Left ventricle myocardium inferior (tissue), 1 donor: ENCODE measurements at regions of chr12 and their contacts with region 1.

Region 1: DNA sequence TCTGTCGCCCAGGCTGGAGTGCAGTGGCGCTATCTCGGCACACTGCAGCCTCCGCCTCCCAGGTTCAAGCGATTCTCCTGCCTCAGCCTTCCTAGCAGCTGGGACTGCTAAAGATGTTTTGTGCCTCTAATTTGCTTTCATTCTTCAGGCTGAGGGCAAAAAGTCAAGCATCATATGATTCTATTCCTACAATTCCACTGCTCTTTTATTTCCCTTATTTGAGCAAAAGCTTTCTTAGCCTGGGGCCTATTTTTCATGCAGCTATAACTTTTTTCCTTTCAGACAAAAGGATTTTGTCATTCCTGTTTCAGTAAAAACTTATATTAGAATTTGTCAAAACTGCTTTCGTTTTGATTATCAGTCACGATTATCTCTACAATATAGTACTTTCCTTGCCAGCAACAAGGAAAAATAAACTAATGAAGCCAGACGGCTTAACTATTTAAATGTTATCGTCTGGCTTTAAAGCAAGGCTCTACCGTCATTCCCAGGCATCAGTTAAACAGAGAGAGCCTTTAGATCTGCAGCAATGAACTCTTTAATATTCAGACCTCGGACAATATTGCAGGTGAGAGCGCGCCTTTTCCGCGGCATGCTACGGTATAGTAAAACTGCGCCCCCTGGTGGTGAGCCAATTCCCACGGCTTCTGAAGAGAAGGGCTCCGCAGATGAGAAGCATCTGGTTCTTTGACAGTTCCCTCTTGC is 1.4 kb upstream of the SLC2A13 start:
- DNase-seq: peak; percentile 91
- H3K4me3 ChIP-seq: peak overlapping the region; percentile 89
- H3K27ac ChIP-seq: peak overlapping the region; percentile 90
- H3K4me1 ChIP-seq: peaks cover 47% of the 10 kb centered on the region
- H3K27me3 ChIP-seq: no peaks in the 10 kb centered on the region
- CTCF ChIP-seq: peak; percentile 94

Region 2: GRCh38 chr12:39723831-39724230 is 383.4 kb before region 1 on chr12:
- intact Hi-C with region 1: no loop called
- DNase-seq: no peak
- H3K4me3 ChIP-seq: no peak overlapping the region
- H3K27ac ChIP-seq: no peak overlapping the region
- H3K4me1 ChIP-seq: no peaks in the 10 kb centered on the region
- H3K27me3 ChIP-seq: no peaks in the 10 kb centered on the region
- CTCF ChIP-seq: no peak

Region 3: DNA sequence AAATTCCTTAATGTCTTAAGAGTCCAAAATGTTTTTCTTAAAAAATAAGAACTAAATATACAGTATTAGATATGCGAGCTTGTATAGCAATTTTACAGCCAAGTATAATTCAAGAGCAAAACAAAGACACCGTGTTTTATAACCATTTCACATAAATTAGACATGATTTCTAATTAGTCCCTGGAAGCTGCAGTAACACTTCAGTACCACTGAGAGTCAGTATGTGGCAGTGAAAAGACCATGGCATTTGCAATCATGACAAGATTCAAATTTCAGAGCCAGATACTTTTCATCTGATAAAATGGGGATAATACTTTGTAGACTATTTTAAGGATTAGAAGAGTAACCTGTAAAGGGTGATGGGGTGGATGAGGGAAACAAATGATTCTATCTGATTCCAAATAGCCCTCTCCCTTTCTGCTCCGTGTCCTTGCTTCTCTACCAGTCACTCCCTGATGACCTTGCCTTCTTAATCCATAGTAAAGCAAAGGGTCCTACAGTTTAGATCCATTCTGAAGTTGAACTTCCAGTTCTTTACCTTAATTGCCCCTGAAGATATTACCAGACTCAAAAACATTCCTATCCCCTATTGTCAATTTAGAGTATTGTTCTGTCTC is 342.2 kb before region 1 on chr12:
- intact Hi-C with region 1: loop called (anchors 10 kb)
- DNase-seq: no peak
- H3K4me3 ChIP-seq: no peak overlapping the region
- H3K27ac ChIP-seq: no peak overlapping the region
- H3K4me1 ChIP-seq: no peaks in the 10 kb centered on the region
- H3K27me3 ChIP-seq: no peaks in the 10 kb centered on the region
- CTCF ChIP-seq: peak; percentile 78

Region 4: DNA sequence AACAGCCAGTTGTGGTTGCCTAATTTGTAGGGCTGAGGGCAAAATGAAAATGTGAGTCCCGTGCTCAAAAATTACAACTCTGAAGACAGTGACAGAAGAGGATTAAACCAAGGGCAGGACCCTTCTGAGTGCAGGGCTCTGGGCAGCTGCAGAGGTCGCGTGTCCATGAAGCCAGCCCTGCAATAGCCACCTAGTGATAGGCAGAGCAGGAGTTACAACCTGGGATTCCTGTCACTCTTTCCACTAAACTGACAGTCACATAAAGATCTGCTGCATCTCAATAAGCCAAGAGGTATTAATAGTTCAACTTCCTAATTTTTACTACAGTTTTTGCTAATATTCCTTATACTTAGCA is 95.5 kb before region 1 on chr12:
- intact Hi-C with region 1: loop called (anchors 1 kb)
- DNase-seq: no peak
- H3K4me3 ChIP-seq: peak overlapping the region; percentile 51
- H3K27ac ChIP-seq: peak overlapping the region; percentile 45
- H3K4me1 ChIP-seq: peaks cover 31% of the 10 kb centered on the region
- H3K27me3 ChIP-seq: no peaks in the 10 kb centered on the region
- CTCF ChIP-seq: no peak

Region 5: DNA sequence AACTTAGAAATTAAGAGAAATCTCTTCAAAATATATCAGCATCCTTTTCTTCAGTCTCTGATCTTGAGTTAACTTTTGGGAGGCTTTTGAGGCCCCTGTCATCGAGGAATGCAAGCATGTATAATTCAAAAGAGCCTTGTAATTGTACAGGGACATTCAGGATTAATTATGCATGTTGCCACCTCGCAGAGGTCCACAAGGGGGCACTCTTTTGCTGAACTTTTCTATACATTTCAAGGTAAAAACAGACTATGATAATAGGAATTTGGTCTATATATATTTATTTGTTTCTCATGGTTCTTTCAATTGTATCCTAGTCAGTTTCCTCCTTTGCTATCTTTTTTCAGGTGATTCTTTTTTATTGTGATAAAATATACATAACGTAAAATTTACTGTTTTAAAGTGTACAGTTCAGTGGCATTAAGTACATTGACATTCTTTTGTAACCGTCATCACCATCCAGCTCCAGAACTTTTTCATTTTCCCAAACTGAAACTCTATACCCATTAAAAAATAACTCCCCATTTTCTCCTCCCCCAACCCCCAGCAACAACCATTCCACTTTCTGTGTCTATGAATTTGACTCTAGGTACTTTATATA is 45.6 kb after region 1 on chr12:
- intact Hi-C with region 1: no loop called
- DNase-seq: peak; percentile 30
- H3K4me3 ChIP-seq: no peak overlapping the region
- H3K27ac ChIP-seq: no peak overlapping the region
- H3K4me1 ChIP-seq: no peaks in the 10 kb centered on the region
- H3K27me3 ChIP-seq: no peaks in the 10 kb centered on the region
- CTCF ChIP-seq: peak; percentile 90